Ovary (tissue), 10 donors: ENCODE measurements at regions of chr17 and their contacts with region 1.

Region 1: DNA sequence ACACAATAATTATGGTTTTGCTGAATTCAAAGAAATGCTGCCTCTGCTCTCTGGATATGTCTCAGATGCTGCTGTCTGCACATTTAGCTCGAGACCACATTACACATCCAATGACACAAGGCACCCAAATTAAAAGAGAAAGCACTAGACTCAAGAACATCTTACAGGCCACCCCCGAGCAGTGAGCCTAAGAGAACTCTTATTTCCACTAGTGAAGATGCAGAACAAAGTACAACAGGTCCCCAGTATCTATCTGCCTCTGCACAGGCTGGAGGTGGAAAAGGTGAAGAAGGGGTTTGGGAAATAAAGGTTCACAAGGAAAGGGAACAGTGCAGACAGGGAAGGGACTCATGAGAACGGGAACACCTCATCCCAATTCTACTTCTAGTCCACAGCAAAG is 33.5 kb downstream of the GRB2 start:
- DNase-seq: no peak
- H3K4me3 ChIP-seq: no peak overlapping the region
- H3K27ac ChIP-seq: no peak overlapping the region
- H3K4me1 ChIP-seq: peaks cover 7% of the 10 kb centered on the region
- H3K27me3 ChIP-seq: no peaks in the 10 kb centered on the region
- CTCF ChIP-seq: no peak
- EP300 ChIP-seq: no peak
- POLR2A ChIP-seq: no peak

Region 2: DNA sequence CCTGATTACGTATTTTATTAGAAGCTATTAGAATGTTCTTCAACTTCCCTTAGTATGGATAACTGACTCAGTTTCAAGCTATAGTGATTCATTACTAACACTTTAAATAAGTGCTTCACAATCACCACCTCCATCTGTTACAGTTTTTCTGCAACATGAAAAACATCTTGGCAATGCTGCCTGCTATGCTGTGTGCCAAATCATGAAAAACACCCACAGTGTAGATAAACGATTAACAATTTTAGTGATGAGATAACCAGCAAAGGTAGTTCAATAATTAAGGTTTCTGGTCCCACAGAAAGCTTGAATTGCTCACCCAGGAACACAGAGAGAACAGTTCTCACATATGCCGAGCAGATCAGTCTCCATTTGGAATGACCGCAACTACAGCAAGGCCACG is 31.4 kb before region 1 on chr17:
- intact Hi-C with region 1: loop called in 1 of 4 experiments (anchors 2 kb)
- DNase-seq: no peak
- H3K4me3 ChIP-seq: no peak overlapping the region
- H3K27ac ChIP-seq: no peak overlapping the region
- H3K4me1 ChIP-seq: peaks cover 1% of the 10 kb centered on the region
- H3K27me3 ChIP-seq: no peaks in the 10 kb centered on the region
- CTCF ChIP-seq: no peak
- EP300 ChIP-seq: no peak
- POLR2A ChIP-seq: no peak